ENCODE measurements at regions of chr6 and their contacts with region 1.

Region 1: GRCh38 chr6:11585426-11586016 is 48.0 kb downstream of the TMEM170B start:
- DNase-seq: peak; percentile 79
- ATAC-seq: peak; percentile 44
- H3K4me3 ChIP-seq: no peak overlapping the region
- H3K27ac ChIP-seq: peak overlapping the region; percentile 62; the same call in 1 of the 2 replicates
- H3K4me1 ChIP-seq: peaks cover 13% of the 10 kb centered on the region
- H3K27me3 ChIP-seq: no peaks in the 10 kb centered on the region
- CTCF ChIP-seq: peak; percentile 82
- POLR2A ChIP-seq: no peak
- RAD21 ChIP-seq: peak; percentile 85

Region 2: DNA sequence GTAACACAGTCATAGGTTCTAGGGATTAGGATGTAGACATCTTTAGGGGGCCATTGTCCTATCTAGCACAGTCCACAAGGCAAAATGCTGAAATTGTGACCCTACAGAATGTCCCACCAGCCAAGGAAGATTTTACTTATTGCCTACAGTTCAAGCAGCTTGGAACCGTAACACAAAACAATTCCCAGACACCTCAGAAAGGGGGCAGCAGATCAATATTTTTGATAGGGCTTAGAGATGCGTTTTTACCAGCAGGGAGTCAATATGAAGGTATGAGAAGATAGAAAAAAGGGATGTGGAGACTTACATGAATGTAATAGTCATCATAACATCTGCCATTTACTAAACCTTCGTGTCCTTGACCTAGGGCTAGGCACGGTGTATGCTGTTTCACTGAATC is 33.0 kb after region 1 on chr6:
- CTCF ChIA-PET with region 1: interaction called, 3 read pairs
- POLR2A ChIA-PET with region 1: no interaction called
- dilution Hi-C with region 1: no loop called
- in situ Hi-C with region 1: no loop called
- intact Hi-C with region 1: loop called (anchors 1 kb)
- DNase-seq: peak; percentile 49
- ATAC-seq: no peak
- H3K4me3 ChIP-seq: no peak overlapping the region
- H3K27ac ChIP-seq: no peak overlapping the region
- H3K4me1 ChIP-seq: peaks cover 14% of the 10 kb centered on the region
- H3K27me3 ChIP-seq: no peaks in the 10 kb centered on the region
- CTCF ChIP-seq: peak; percentile 37
- POLR2A ChIP-seq: no peak
- RAD21 ChIP-seq: peak; percentile 48

Region 3: GRCh38 chr6:11770546-11771466 is 185.3 kb after region 1 on chr6:
- CTCF ChIA-PET with region 1: no interaction called
- POLR2A ChIA-PET with region 1: no interaction called
- dilution Hi-C with region 1: no loop called
- in situ Hi-C with region 1: no loop called
- intact Hi-C with region 1: loop called (anchors 1 kb)
- DNase-seq: peak; percentile 100
- ATAC-seq: peak; percentile 81
- H3K4me3 ChIP-seq: no peak overlapping the region
- H3K27ac ChIP-seq: peak overlapping the region; percentile 81
- H3K4me1 ChIP-seq: peaks cover 36% of the 10 kb centered on the region
- H3K27me3 ChIP-seq: no peaks in the 10 kb centered on the region
- CTCF ChIP-seq: no peak
- POLR2A ChIP-seq: peak; percentile 74; the same call in 1 of the 2 replicates
- RAD21 ChIP-seq: no peak; the same call in none of the 2 replicates

Region 4: GRCh38 chr6:12011276-12012076 is 426.0 kb after region 1 on chr6:
- CTCF ChIA-PET with region 1: no interaction called
- POLR2A ChIA-PET with region 1: no interaction called
- dilution Hi-C with region 1: no loop called
- in situ Hi-C with region 1: loop called (anchors 10 kb)
- intact Hi-C with region 1: loop called (anchors 2 kb)
- DNase-seq: peak; percentile 96
- ATAC-seq: peak; percentile 72
- H3K4me3 ChIP-seq: peak overlapping the region; percentile 76
- H3K27ac ChIP-seq: peak overlapping the region; percentile 63; the same call in 1 of the 2 replicates
- H3K4me1 ChIP-seq: no peaks in the 10 kb centered on the region; the same call in 1 of the 2 replicates
- H3K27me3 ChIP-seq: no peaks in the 10 kb centered on the region
- CTCF ChIP-seq: no peak
- POLR2A ChIP-seq: peak; percentile 66
- RAD21 ChIP-seq: no peak

Region 5: GRCh38 chr6:12147557-12148316 is 562.2 kb after region 1 on chr6:
- CTCF ChIA-PET with region 1: no interaction called
- POLR2A ChIA-PET with region 1: no interaction called
- dilution Hi-C with region 1: no loop called
- in situ Hi-C with region 1: no loop called
- intact Hi-C with region 1: loop called (anchors 5 kb)
- DNase-seq: peak; percentile 37
- ATAC-seq: peak; percentile 36
- H3K4me3 ChIP-seq: no peak overlapping the region
- H3K27ac ChIP-seq: peak overlapping the region; percentile 51; the same call in 1 of the 2 replicates
- H3K4me1 ChIP-seq: peaks cover 12% of the 10 kb centered on the region
- H3K27me3 ChIP-seq: no peaks in the 10 kb centered on the region
- CTCF ChIP-seq: peak; percentile 30; the same call in 1 of the 2 replicates
- POLR2A ChIP-seq: no peak
- RAD21 ChIP-seq: peak; percentile 18; the same call in 1 of the 2 replicates

Region 6: GRCh38 chr6:12289933-12290820 is 704.7 kb after region 1 on chr6 and contains the start of gene EDN1:
- CTCF ChIA-PET with region 1: interaction called, 6 read pairs
- POLR2A ChIA-PET with region 1: no interaction called
- dilution Hi-C with region 1: no loop called
- in situ Hi-C with region 1: loop called (anchors 5 kb)
- intact Hi-C with region 1: loop called (anchors 1 kb)
- DNase-seq: peak; percentile 84
- ATAC-seq: peak; percentile 88
- H3K4me3 ChIP-seq: peak within 1 kb of the TSS; percentile 74
- H3K27ac ChIP-seq: peak within 1 kb of the TSS; percentile 83
- H3K4me1 ChIP-seq: peaks cover 12% of the 10 kb centered on the region
- H3K27me3 ChIP-seq: no peaks in the 10 kb centered on the region
- CTCF ChIP-seq: peak; percentile 45
- POLR2A ChIP-seq: peak; percentile 89
- RAD21 ChIP-seq: peak; percentile 52
- total RNA-seq, gene EDN1: 5.6 and 8.6 TPM in 2 replicates

Measured in IMR-90 (cell line).